Transverse colon (tissue), 4 donors: ENCODE measurements at regions of chr12 and their contacts with region 1.

Region 1: DNA sequence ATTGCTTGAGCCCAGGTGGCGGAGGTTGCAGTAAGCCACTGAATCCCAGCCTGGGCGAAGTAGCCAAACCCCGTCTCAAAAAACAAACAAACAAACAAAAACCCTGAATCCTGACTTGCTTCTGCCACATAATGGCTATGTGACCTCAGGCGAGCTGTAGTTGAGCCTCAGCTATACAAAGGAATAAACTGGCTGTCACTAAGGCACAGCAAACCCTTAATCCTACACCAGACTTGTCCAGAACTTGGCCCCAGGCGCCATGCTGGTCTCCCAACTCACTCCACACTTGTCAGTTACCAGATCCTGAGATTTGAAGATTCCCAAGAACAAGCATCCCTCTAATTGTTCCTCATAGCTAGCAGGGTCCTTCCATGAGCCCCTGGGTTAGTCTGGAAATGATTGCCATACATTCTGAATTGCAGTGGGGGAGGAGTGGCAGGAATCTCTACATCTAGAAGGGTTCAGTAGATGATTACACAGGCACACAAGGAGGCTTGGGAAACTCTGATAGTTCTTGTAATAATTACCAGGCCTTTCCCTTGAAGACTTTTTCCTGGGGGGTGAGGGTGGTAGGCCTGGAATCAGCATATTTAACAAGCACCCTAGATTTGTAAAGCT is 9.9 kb downstream of the MAP3K12 start:
- DNase-seq: no peak
- H3K4me3 ChIP-seq: no peak overlapping the region
- H3K27ac ChIP-seq: no peak overlapping the region
- H3K4me1 ChIP-seq: peaks cover 9 to 21% (median 14%) of the 10 kb centered on the region in 4 donors
- H3K27me3 ChIP-seq: no peaks in the 10 kb centered on the region
- CTCF ChIP-seq: no peak
- EP300 ChIP-seq: no peak
- POLR2A ChIP-seq: no peak

Region 2: DNA sequence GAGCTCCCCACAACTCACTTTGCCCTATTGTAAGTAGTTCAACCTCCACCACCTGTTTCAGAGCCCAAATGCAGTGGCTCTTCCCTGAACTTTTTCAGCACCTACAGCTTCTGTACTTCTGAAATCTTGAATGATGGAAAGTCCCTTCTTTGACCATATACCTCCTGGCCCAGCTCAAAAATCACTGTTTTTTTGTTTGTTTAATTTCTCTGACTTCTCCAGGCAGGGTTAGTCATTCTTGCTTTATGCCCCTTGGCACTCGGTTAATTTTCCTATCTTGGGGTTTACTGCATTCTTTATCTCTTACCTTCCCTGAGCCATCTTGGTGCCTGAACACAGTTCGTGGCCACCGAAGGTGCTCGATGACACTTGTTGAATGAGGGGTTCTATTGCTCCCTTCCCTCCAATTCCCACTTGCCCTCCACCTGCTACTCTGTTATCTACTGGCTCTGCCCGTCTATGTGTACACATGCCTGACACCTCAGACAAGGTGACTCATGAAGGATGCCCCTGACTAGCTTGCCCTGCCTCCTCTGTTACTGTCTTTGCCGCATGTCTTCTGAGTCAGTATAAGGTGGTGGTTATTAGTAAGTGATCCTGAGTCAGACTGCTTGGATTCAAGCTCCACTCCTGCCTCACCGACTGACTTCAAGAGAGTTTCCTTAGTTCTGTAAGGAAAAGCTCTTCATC is 61.3 kb before region 1 on chr12:
- in situ Hi-C with region 1: no loop called
- intact Hi-C with region 1: no loop called
- DNase-seq: no peak
- H3K4me3 ChIP-seq: no peak overlapping the region
- H3K27ac ChIP-seq: no peak overlapping the region
- H3K4me1 ChIP-seq: no peaks in the 10 kb centered on the region
- H3K27me3 ChIP-seq: no peaks in the 10 kb centered on the region
- CTCF ChIP-seq: no peak
- EP300 ChIP-seq: no peak
- POLR2A ChIP-seq: no peak

Region 3: DNA sequence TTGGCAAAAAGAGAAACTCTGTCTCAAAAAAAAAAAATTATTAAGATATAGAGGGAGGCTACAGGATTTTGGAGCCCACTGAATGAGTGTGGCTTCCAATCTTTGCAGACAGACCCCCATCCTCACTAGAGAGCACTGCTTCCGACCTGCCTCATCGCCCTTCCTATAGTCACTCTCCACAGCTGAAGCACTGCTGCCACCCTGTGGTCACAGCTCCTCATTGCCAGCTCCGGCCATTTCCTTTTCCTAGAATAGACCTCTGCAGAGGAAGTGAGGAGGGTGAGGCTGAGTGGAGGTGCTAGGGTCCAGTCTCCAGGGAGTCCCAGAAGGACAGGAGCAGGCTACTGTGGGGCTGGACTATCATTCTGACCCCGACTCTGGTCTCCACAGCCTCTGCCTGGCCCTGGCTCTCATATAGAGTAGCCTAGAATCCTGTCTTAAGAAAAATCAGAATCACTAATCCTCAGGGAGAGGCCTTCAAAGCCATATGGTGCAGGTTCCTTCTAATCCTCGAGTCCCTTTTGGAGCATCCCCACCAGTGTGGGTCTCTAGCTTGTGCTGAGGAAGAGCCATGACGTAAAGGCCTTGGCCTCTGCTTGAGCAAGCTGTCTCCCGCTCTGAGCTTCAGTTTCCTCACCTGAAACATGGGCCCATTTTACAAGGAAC is 19.3 kb after region 1 on chr12:
- in situ Hi-C with region 1: no loop called
- intact Hi-C with region 1: loop called (anchors 2 kb)
- DNase-seq: peak; percentile 91
- H3K4me3 ChIP-seq: no peak overlapping the region
- H3K27ac ChIP-seq: peak overlapping the region; percentile 22 to 60 (median 39)
- H3K4me1 ChIP-seq: peaks cover 0 to 9% (median 0%) of the 10 kb centered on the region in 4 donors
- H3K27me3 ChIP-seq: no peaks in the 10 kb centered on the region
- CTCF ChIP-seq: peak; percentile 87 to 96 (median 91)
- EP300 ChIP-seq: no peak
- POLR2A ChIP-seq: no peak

Region 4: DNA sequence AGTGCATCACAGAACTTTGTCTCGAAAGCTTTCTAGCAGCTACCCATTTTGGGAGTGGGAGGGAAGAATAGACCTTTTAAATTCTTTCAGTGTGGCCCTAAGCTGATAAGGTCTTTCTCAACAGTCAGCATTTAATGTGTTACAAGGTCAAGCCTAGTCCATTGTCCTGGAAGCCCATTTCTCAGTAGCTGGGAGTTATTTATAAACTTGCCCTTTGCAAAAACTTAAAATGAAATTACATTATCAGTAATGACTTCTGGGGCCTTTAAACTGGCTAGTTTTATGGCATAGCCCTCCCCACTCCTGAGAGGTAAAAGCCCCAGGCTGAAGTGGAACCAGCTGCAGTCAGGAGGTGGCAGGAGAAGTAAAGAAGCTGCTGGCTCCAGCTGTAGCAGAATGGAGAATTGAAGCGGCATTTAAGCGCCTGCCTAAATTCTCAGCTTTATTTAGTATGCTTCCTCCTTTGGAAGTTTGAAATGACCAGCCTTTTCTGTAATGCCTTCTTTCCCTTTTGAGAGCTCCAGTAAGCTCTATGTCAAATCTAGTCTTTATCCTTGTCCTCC is 848.0 kb after region 1 on chr12:
- in situ Hi-C with region 1: no loop called
- intact Hi-C with region 1: no loop called
- DNase-seq: no peak
- H3K4me3 ChIP-seq: no peak overlapping the region
- H3K27ac ChIP-seq: peak overlapping the region; percentile 40 to 68 (median 61)
- H3K4me1 ChIP-seq: peaks cover 10 to 48% (median 27%) of the 10 kb centered on the region in 4 donors
- H3K27me3 ChIP-seq: no peaks in the 10 kb centered on the region
- CTCF ChIP-seq: peak in 1 of 5 experiments; percentile 1
- EP300 ChIP-seq: no peak
- POLR2A ChIP-seq: no peak